ENCODE measurements at regions of chr1 and their contacts with region 1.

Region 1: DNA sequence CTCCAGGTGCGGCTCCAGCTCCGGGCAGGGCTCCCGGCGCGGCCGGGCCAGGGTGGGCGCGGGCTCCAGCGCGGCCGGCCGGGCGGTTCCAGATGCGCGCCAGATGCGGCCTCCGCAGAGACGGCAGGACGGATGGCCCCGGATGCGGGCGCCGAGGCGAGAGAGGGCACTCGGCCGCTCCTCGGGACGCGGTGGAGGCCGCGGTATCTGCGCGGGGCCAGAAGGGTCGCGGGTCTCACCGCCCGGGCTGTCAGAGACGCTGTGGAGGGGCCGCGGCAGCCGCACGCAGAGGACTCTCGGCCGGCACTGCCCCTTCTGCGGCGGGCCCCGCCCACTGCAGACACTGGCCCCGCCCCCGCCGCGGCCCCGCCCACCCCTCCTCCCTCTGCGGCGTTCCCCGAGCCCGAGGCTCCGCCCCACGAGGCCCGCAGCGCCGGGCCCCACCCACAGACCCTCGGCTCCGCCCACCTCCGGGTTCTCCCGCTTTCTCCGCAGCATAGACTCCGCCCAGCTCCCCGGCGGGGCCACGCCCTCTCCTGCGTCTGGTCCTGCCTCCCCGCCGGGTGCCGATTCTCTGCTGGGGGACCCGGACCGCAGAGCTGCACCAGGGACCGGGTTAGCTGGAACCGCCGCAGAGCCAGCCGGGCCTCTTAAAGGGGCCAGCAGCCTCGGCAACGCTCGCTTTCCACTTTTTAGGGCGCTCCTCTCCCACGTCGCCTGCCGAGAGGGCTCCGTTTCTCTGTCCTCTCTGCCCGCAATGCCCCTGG is at the start of gene IFFO2:
- DNase-seq: peak; percentile 94
- ATAC-seq: peak; percentile 89 to 93
- H3K4me3 ChIP-seq: peak within 1 kb of the TSS; percentile 63 to 91 (median 76)
- H3K27ac ChIP-seq: peak within 1 kb of the TSS; percentile 41 to 81 (median 72)
- H3K4me1 ChIP-seq: peaks cover 18 to 30% of the 10 kb centered on the region in 2 donors
- H3K27me3 ChIP-seq: no peaks in the 10 kb centered on the region
- CTCF ChIP-seq: no peak
- POLR2A ChIP-seq: peak; percentile 86 to 92
- total RNA-seq, gene IFFO2: 2.1 to 16.3 (median 5.7) TPM

Region 2: DNA sequence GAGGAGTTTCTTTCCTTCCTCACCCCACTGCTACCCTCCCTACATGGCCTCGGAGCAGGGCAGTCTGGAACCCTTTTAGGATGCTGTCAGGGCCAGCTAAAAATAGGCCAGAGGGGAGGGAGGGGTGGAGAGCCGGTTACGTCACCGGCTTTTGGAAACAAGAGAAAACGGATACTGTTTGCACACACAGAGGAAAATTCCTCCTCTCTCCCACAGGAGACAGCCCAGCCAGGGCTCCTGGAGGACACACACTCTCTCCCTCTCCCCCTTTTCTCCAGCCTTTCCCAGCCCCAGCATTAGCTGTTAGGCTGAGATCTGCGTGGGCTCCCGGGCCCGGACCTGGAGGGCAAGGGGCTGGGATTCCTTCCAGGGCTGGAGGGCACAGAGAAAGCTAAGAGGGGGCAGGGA is 34.2 kb before region 1 on chr1:
- in situ Hi-C with region 1: no loop called
- intact Hi-C with region 1: loop called (anchors 2 kb)
- DNase-seq: peak; percentile 73 to 83
- ATAC-seq: peak; percentile 87 to 91
- H3K4me3 ChIP-seq: peak overlapping the region in 2 of 4 donors; percentile 4 to 39
- H3K27ac ChIP-seq: peak overlapping the region; percentile 80 to 93 (median 84)
- H3K4me1 ChIP-seq: peaks cover 43 to 48% of the 10 kb centered on the region in 2 donors
- H3K27me3 ChIP-seq: no peaks in the 10 kb centered on the region
- CTCF ChIP-seq: peak in 3 of 5 experiments; percentile 7 to 16 (median 15)
- POLR2A ChIP-seq: peak; percentile 32 to 72

Region 3: DNA sequence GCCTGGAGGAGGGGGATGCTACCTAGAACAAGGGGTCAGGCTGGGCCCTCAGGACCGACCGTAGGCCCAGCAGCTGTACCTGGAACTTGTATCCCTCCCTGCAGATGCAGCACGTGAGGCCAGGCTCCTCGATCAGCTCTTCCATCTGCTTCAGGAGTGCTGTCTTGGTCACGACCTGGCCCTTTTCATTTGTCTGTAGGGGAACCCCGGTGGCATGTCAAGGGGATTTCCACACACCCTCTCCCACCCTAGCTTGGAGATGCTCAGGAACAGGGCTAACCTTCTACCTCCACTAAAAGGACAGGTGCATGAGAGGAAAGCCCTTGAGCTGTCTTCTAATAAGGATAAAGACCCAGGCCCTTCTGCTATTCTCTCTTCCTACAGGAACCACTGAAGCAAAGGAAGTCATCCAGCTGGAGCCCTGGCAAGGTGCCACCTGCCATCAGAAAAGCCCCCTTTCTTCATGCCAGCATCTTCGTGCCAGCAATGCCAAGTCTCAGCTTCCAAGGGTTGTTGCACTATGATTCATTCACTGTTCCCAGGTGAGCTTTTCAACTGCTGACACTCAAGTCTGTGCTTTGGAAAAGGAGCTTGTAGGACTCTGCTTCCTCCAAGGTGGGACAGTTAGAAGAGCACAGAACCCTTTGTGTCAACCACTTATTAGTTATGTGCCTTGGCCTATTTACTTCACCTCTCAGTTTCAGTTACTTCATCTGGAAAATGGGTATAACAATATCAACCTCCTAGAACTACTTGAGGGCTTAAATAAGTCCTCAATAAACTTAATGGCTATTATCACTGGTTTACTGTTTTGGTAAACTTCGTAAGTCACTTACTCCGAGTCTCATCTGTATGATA is 131.4 kb after region 1 on chr1:
- in situ Hi-C with region 1: no loop called
- intact Hi-C with region 1: loop called (anchors 5 kb)
- DNase-seq: no peak
- ATAC-seq: no peak
- H3K4me3 ChIP-seq: no peak overlapping the region
- H3K27ac ChIP-seq: peak overlapping the region; percentile 79 to 90 (median 86)
- H3K4me1 ChIP-seq: peaks cover 59 to 67% of the 10 kb centered on the region in 2 donors
- H3K27me3 ChIP-seq: no peaks in the 10 kb centered on the region
- CTCF ChIP-seq: no peak
- POLR2A ChIP-seq: no peak

Region 4: DNA sequence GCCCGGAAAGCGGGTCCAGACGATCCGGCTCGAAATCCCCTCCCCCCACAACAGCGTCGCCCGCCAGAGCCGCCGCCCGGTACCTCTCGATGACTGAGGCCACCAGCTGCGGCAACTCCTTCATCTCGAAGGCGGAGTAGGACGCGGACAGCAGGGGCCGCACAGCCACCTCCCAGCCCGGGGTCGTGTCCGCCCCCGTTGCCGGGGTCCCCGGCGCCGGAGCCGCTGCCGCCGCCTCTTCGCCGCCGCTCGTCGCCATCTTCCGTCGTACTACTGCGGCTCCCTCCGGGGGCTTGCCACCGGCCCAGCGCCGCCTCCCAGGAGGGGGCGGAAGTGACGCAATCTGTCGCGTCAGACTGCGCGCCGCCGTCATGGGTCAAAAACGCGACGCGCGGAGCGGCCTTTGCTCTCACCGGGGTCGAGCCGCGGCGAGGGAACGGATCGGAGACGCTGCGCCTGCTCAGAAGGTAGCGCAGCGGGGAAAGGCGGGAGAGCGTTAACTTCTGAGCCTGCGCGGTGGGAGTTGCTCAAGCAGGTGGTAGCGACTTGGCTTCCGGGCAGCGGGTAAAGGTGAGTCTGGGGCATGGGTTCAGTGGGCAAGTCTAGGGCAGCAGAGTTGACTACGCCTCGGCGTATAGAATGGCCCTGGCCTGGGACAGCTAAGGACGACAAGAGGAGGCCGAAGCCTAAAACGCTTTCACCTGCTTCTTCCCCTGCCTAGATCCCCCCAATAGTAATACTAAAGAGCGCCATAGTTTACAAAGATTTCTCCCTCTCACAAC is 253.6 kb after region 1 on chr1 and contains the start of gene UBR4:
- in situ Hi-C with region 1: no loop called
- intact Hi-C with region 1: loop called (anchors 10 kb)
- DNase-seq: peak; percentile 91 to 94
- ATAC-seq: peak; percentile 92 to 95
- H3K4me3 ChIP-seq: peak within 1 kb of the TSS; percentile 84 to 92 (median 88)
- H3K27ac ChIP-seq: peak within 1 kb of the TSS; percentile 93 to 97 (median 95)
- H3K4me1 ChIP-seq: peaks cover 64 to 74% of the 10 kb centered on the region in 2 donors
- H3K27me3 ChIP-seq: no peaks in the 10 kb centered on the region
- CTCF ChIP-seq: peak in 1 of 5 experiments; percentile 3
- POLR2A ChIP-seq: peak; percentile 97 to 98
- total RNA-seq, gene UBR4: 156 to 293 (median 197) TPM

Measured in gastrocnemius medialis (tissue), 4 donors.